Activated naive CD4-positive, alpha-beta T cell treated with anti-CD3 and anti-CD28 coated beads for 36 hours (primary cell): ENCODE measurements at regions of chr5 and their contacts with region 1.

Region 1: GRCh38 chr5:108748401-108749127 is 867 bp downstream of the FER start:
- DNase-seq: peak; percentile 98
- H3K4me3 Mint-ChIP-seq: peak overlapping the region; percentile 85
- H3K27ac Mint-ChIP-seq: peak overlapping the region; percentile 88
- H3K4me1 Mint-ChIP-seq: peaks cover 17% of the 10 kb centered on the region
- H3K27me3 Mint-ChIP-seq: no peaks in the 10 kb centered on the region

Region 2: GRCh38 chr5:108260117-108260857 is 488.3 kb before region 1 on chr5:
- CTCF ChIA-PET with region 1: no interaction called
- intact Hi-C with region 1: loop called (anchors 10 kb)
- DNase-seq: peak; percentile 83
- H3K4me3 Mint-ChIP-seq: peak overlapping the region; percentile 48
- H3K27ac Mint-ChIP-seq: no peak overlapping the region
- H3K4me1 Mint-ChIP-seq: peaks cover 9% of the 10 kb centered on the region
- H3K27me3 Mint-ChIP-seq: no peaks in the 10 kb centered on the region

Region 3: GRCh38 chr5:108634617-108635288 is 113.8 kb before region 1 on chr5:
- CTCF ChIA-PET with region 1: no interaction called
- intact Hi-C with region 1: loop called (anchors 1 kb)
- DNase-seq: no peak
- H3K4me3 Mint-ChIP-seq: no peak overlapping the region
- H3K27ac Mint-ChIP-seq: no peak overlapping the region
- H3K4me1 Mint-ChIP-seq: peaks cover 7% of the 10 kb centered on the region
- H3K27me3 Mint-ChIP-seq: peaks cover 7% of the 10 kb centered on the region

Region 4: GRCh38 chr5:108760512-108760911 is 11.9 kb after region 1 on chr5:
- CTCF ChIA-PET with region 1: no interaction called
- intact Hi-C with region 1: loop called (anchors 1 kb)
- DNase-seq: no peak
- H3K4me3 Mint-ChIP-seq: no peak overlapping the region
- H3K27ac Mint-ChIP-seq: no peak overlapping the region
- H3K4me1 Mint-ChIP-seq: peaks cover 20% of the 10 kb centered on the region
- H3K27me3 Mint-ChIP-seq: no peaks in the 10 kb centered on the region

Region 5: GRCh38 chr5:109053995-109054417 is 305.4 kb after region 1 on chr5:
- CTCF ChIA-PET with region 1: no interaction called
- intact Hi-C with region 1: no loop called
- DNase-seq: no peak
- H3K4me3 Mint-ChIP-seq: no peak overlapping the region
- H3K27ac Mint-ChIP-seq: no peak overlapping the region
- H3K4me1 Mint-ChIP-seq: no peaks in the 10 kb centered on the region
- H3K27me3 Mint-ChIP-seq: no peaks in the 10 kb centered on the region

Region 6: GRCh38 chr5:109125755-109126429 is 377.3 kb after region 1 on chr5:
- CTCF ChIA-PET with region 1: no interaction called
- intact Hi-C with region 1: no loop called
- DNase-seq: no peak
- H3K4me3 Mint-ChIP-seq: no peak overlapping the region
- H3K27ac Mint-ChIP-seq: no peak overlapping the region
- H3K4me1 Mint-ChIP-seq: no peaks in the 10 kb centered on the region
- H3K27me3 Mint-ChIP-seq: no peaks in the 10 kb centered on the region

Region 7: GRCh38 chr5:109242518-109242917 is 494.0 kb after region 1 on chr5:
- CTCF ChIA-PET with region 1: no interaction called
- intact Hi-C with region 1: loop called (anchors 5 kb)
- DNase-seq: peak; percentile 10
- H3K4me3 Mint-ChIP-seq: no peak overlapping the region
- H3K27ac Mint-ChIP-seq: no peak overlapping the region
- H3K4me1 Mint-ChIP-seq: peaks cover 5% of the 10 kb centered on the region
- H3K27me3 Mint-ChIP-seq: peaks cover 5% of the 10 kb centered on the region

Region 8: DNA sequence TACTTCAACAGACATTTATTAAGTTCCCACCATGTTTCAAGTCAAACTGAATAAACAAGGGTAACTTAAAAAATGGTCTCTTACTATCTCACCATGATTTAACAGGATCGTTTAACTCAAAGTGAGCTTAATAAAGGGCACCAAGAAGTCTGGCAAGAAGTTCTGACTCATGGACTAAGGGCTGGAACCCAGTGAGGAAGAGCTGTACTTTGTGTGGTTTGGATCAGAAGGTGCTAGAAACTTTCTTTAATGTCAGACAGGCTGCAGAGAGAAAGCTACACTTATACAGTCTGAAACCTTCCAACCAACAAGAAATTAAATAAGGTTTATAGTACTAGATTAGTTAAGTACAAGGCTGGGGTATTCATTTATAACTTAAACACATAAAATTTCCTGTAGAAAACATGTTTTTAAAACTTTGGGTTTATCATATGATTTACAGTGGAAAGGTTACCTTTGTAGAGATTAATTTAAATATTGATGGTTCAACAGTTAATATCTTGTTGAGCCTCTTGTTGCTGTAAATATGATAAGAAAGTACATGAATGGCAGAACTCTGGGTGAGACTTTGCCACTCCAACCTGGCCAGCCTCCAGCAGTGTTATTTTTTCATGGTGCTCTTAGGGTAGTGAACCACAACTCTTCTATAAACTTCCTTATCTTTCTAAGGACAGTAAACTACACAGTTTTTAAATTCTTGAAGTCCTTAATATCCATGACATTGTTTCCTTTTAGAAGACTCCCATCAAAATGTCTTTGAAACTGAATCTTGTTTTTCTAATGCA is 1104.0 kb after region 1 on chr5:
- CTCF ChIA-PET with region 1: no interaction called
- intact Hi-C with region 1: loop called (anchors 5 kb)
- DNase-seq: peak; percentile 30
- H3K4me3 Mint-ChIP-seq: no peak overlapping the region
- H3K27ac Mint-ChIP-seq: peak overlapping the region; percentile 54
- H3K4me1 Mint-ChIP-seq: peaks cover 75% of the 10 kb centered on the region
- H3K27me3 Mint-ChIP-seq: no peaks in the 10 kb centered on the region

Region 9: DNA sequence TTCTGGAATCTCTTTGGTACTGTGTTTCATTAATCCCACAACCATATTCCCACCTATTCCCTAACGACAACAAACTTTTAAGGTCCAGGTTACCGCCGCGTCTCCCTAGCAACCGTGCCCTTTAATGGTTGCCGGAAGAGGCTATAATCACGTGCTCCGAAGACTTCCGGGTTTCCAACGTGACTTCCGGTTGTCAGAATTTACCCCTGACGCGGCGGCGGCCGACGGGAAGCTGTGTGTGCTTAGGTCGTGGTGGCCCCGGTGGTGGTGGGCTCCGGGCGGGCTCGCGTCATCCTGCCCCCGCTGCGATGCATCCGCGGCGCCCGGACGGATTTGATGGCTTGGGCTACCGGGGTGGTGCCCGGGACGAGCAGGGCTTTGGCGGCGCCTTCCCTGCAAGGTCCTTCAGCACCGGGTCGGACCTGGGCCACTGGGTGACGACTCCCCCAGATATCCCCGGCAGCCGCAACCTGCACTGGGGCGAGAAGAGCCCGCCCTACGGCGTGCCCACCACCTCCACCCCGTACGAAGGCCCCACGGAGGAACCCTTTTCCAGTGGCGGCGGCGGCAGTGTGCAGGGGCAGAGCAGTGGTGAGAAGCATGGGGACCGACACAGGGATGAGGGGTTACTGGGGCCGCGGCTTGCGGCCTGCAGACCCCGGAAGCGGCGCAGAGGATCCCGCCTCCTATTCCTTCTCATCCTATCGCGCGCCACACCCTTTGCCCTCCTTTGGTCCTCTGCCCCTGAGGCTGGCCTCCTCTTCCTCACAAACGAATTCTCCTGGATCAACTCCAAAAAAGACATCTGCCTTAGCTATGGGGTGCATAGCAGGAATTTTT is 1990.5 kb after region 1 on chr5 and contains the start of gene SLC25A46:
- CTCF ChIA-PET with region 1: no interaction called
- intact Hi-C with region 1: loop called (anchors 5 kb)
- DNase-seq: peak; percentile 89
- H3K4me3 Mint-ChIP-seq: peak within 1 kb of the TSS; percentile 96
- H3K27ac Mint-ChIP-seq: peak within 1 kb of the TSS; percentile 86
- H3K4me1 Mint-ChIP-seq: peaks cover 25% of the 10 kb centered on the region
- H3K27me3 Mint-ChIP-seq: peaks cover 8% of the 10 kb centered on the region
- total RNA-seq, gene SLC25A46: 26.1 to 27.2 TPM